HCT116 (cell line): ENCODE measurements at regions of chr22 and their contacts with region 1.

Region 1: DNA sequence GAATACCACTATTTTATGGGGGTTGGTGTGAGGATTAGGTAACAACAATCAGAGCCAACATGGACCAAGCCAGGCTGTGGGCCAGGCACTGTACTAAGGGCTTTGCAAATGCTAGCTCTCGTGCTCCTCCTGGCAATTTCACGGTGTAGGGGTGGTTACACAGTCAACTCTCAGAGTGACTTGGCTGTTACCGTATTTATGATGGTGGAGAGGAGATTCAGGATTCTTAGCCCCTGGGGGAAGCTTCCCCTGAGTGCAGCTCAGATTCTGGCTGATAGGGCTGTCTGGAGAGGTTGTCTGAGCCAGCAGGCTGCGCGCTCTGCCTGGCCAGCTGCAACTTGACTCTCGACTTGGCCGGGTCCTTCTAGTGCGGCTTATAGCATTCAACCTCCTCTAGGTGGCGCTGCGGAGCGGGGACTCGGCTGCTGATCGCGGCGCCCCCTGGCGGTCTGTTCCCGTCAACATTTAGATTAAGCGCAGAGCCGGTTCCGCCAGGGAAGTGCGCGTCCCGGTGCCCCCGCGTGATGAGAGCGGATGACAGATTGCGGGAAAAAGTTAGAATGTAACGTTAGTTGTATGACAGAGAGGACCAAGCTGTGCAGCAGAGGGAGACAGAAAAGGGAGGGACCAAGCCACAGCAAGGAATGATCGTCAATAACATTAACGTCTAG is 4.5 kb upstream of the NCF4 start:
- DNase-seq: peak; percentile 73
- ATAC-seq: peak; percentile 92
- H3K4me3 ChIP-seq: peak overlapping the region in 1 of 2 experiments; percentile 8; a peak in 1 of 4 replicates
- H3K27ac ChIP-seq: no peak overlapping the region
- H3K4me1 ChIP-seq: peaks cover 0 to 19% of the 10 kb centered on the region in 2 experiments; a peak in 1 of 4 replicates
- H3K27me3 ChIP-seq: no peaks in the 10 kb centered on the region
- CTCF ChIP-seq: peak; percentile 100
- POLR2A ChIP-seq: no peak
- RAD21 ChIP-seq: peak; percentile 82

Region 2: GRCh38 chr22:36419177-36419911 is 436.9 kb before region 1 on chr22:
- CTCF ChIA-PET with region 1: no interaction called
- POLR2A ChIA-PET with region 1: no interaction called
- RAD21 ChIA-PET with region 1: no interaction called
- intact Hi-C with region 1: no loop called
- DNase-seq: no peak
- ATAC-seq: no peak
- H3K4me3 ChIP-seq: no peak overlapping the region
- H3K27ac ChIP-seq: no peak overlapping the region
- H3K4me1 ChIP-seq: peaks cover 17 to 23% of the 10 kb centered on the region in 2 experiments; a peak in 3 of 4 replicates
- H3K27me3 ChIP-seq: no peaks in the 10 kb centered on the region
- CTCF ChIP-seq: no peak
- POLR2A ChIP-seq: no peak
- RAD21 ChIP-seq: no peak

Region 3: GRCh38 chr22:36775964-36776669 is 80.1 kb before region 1 on chr22 and contains the start of gene IFT27:
- CTCF ChIA-PET with region 1: interaction called, 12 read pairs
- POLR2A ChIA-PET with region 1: interaction called, 3 read pairs
- RAD21 ChIA-PET with region 1: no interaction called
- intact Hi-C with region 1: no loop called
- DNase-seq: peak; percentile 100
- ATAC-seq: peak; percentile 95
- H3K4me3 ChIP-seq: peak within 1 kb of the TSS; percentile 89 to 96
- H3K27ac ChIP-seq: peak within 1 kb of the TSS; percentile 24; the same call in 1 of the 2 replicates
- H3K4me1 ChIP-seq: peaks cover 5 to 20% of the 10 kb centered on the region in 2 experiments
- H3K27me3 ChIP-seq: no peaks in the 10 kb centered on the region
- CTCF ChIP-seq: no peak
- POLR2A ChIP-seq: peak; percentile 63
- RAD21 ChIP-seq: no peak
- total RNA-seq, gene IFT27: 23.2 TPM

Region 4: DNA sequence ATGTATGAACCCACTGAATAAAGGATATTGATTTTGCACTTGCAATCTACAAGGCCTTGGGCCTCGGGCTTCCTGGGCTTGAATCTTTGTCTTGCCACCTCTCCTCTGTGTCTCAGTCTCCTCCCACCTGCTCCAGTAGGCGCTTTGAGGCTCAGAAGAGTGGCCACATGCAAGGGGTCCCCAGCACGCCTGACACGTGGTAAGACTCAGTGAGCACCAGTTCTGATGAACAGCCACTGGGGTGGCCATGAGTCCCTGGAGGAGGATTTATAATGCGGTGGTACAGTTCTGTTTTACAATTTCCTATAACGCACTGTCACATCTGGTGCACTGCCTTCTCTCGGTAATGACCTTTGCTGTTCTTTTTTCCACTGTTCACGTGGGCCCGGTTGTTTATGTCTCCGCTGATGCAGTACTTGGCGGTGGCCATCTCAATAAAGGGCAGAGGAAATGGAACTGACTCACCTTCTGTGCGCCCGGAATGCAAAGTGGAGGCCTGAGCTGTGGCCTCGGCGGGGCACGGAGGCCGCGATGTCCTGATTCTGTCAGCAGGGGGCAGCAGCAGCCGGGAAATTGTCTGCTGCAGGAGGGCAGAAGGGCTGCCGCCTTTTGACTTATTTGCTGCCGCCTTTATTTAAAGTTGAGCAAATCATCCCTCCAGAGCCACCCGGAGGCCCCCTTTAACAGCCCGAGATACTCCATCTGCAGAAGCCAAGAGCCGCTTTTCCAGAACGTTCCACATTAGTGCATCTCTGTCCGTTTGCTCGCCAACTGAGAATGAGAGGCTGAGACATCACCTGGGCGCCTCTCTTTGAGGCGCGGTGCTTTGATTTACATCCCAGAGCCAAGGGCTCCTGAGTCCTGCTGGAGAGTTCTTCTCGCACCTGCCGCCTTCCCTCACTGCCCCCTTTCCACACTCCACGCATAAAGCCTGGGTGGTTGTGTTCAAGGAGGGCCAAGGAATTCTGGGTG is 74.3 kb before region 1 on chr22:
- CTCF ChIA-PET with region 1: interaction called, 17 read pairs
- POLR2A ChIA-PET with region 1: no interaction called
- RAD21 ChIA-PET with region 1: no interaction called
- intact Hi-C with region 1: loop called (anchors 1 kb)
- DNase-seq: peak; percentile 57
- ATAC-seq: peak; percentile 95
- H3K4me3 ChIP-seq: peak overlapping the region in 1 of 2 experiments; percentile 1; a peak in 1 of 4 replicates
- H3K27ac ChIP-seq: peak overlapping the region; percentile 14; the same call in 1 of the 2 replicates
- H3K4me1 ChIP-seq: peaks cover 2 to 13% of the 10 kb centered on the region in 2 experiments; a peak in 3 of 4 replicates
- H3K27me3 ChIP-seq: no peaks in the 10 kb centered on the region
- CTCF ChIP-seq: peak; percentile 86 to 96 (median 93)
- POLR2A ChIP-seq: no peak
- RAD21 ChIP-seq: peak; percentile 93

Region 5: DNA sequence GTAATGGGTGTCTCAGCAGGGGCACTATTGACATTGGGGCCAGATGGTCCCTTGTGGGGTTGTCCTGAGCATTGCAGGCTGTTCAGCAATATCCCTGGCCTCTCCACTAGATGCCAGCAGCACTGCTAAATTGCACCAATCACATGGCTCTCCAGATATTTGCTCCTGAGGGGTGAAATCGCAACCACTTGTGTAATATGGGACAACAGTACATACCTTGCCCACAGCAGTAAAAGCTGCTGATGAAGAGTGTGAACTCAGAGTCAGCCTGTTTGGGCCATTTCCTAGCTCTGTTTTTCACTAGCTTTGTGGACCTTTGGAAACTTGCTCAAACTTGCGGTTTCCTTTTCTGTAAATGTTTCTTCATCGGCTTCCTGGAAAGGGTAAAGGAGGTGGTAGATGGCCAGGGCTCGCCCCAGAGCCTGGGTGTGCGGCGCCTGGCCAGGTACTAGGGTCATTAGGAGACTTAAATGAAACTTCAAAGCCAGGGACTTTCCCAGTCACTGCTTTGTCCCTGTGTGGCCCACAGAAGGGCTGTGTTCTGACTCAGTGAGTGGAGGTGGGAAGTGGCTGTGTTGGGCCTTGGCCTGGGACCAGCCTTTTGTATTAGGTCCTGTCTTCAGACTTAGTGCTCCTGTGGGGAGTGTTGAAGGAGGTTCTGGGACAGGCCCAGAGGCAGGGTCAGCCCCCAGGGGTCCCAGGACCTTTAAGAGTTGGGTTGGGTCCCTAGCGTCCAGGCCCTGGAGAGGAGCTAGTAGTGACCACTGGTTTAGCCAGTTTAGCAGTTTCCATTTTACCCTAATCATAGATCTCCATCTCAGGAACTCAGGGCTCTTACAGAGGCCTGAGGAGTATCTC is 17.7 kb after region 1 on chr22:
- CTCF ChIA-PET with region 1: interaction called, 40 read pairs
- POLR2A ChIA-PET with region 1: no interaction called
- RAD21 ChIA-PET with region 1: no interaction called
- intact Hi-C with region 1: no loop called
- DNase-seq: peak; percentile 37
- ATAC-seq: peak; percentile 85
- H3K4me3 ChIP-seq: no peak overlapping the region
- H3K27ac ChIP-seq: no peak overlapping the region
- H3K4me1 ChIP-seq: peaks cover 24 to 48% of the 10 kb centered on the region in 2 experiments; a peak in 3 of 4 replicates
- H3K27me3 ChIP-seq: no peaks in the 10 kb centered on the region
- CTCF ChIP-seq: peak; percentile 53 to 63 (median 59); a peak in 5 of 6 replicates
- POLR2A ChIP-seq: no peak
- RAD21 ChIP-seq: peak; percentile 58